ENCODE measurements at regions of chr2 and their contacts with region 1.

Region 1: DNA sequence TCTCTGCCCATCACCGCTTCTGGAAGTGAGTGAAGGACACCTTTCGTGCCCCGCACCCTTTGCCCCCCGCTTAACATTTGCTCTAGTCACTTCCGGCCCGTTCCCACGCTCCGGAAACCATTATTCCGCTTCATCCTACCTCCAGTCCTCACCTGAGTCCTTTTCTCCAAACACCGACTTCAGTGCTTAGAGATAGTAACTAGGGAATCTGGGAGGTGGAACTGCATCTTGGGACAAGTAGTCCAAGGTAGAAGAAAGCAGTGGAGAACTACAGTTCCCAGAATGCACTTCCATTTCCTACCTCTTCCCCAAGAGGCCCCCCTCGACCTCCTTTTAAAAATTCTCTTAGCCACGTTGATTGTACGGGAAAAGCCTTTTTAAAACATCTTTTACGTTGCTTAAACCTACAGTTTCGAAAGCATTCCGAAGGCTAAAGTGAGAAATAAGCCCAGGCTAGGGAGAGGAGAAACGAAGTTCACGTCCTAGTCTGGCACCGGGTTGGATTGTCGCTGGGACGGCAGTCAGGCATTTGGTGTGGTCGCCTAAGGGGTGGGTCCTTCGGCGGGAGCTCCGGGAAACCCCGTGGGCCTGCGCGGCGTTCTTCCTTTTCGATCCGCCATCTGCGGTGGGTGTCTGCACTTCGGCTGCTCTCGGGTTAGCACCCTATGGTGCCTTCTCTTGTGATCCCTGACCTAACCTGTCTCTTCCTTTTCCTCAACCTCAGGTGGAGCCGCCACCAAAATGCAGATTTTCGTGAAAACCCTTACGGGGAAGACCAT is at the starts of genes CLHC1 and RPS27A:
- DNase-seq: peak; percentile 94
- H3K4me3 ChIP-seq: peak within 1 kb of the TSS; percentile 74 to 92 (median 88)
- H3K27ac ChIP-seq: peak within 1 kb of the TSS; percentile 92 to 95 (median 92)
- H3K4me1 ChIP-seq: peaks cover 0 to 34% (median 18%) of the 10 kb centered on the region in 4 donors
- H3K27me3 ChIP-seq: no peaks in the 10 kb centered on the region
- CTCF ChIP-seq: no peak
- EP300 ChIP-seq: no peak
- POLR2A ChIP-seq: peak; percentile 80 to 86
- total RNA-seq, gene CLHC1: 4.9 to 22.4 (median 11.4) TPM
- total RNA-seq, gene RPS27A: 1,474 to 3,968 (median 2,475) TPM

Region 2: DNA sequence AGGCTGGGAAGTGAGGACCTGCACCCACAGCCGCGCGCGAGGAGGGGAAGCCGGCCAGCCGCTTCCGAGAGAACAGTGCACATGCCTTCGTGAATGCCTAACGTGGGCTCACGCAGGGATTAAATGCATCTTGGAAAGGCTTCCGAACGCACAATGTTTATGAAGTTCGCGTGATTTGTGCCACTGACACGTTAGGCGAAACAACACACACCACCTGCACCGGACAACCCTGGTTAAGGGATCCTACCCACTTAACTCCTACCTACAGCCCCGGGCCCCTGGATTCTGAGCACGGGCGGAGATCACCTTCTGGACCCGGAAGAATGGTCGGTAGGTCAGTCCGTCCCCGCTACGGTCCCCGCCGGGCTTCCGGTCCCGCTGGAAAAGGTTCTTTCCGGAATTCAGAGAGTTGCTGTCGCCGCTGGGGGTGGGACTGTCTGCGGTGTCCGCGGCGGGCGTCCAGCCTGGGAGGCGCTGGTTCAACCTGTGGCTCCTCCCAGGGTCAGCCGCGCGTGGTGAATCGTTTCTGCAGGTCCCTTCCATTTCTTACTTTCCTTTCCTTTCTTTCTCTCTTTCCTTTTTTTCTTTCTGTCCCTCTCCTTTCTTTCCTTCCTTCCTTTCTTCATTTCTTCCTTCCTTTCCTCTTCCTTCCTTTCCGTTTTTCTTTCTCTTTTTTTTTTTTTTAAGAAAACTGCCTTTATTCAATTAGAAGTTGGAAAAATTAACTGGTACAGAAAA is 36.8 kb after region 1 on chr2 and contains the start of gene MTIF2:
- intact Hi-C with region 1: loop called (anchors 2 kb)
- DNase-seq: peak; percentile 97
- H3K4me3 ChIP-seq: peak within 1 kb of the TSS; percentile 55 to 73 (median 67)
- H3K27ac ChIP-seq: peak within 1 kb of the TSS; percentile 86 to 90 (median 87)
- H3K4me1 ChIP-seq: peaks cover 0 to 18% (median 14%) of the 10 kb centered on the region in 4 donors
- H3K27me3 ChIP-seq: no peaks in the 10 kb centered on the region
- CTCF ChIP-seq: no peak
- EP300 ChIP-seq: peak in 1 of 4 donors; percentile 14
- POLR2A ChIP-seq: peak; percentile 16 to 31
- total RNA-seq, gene MTIF2: 15.0 to 27.7 (median 22.4) TPM

Region 3: GRCh38 chr2:55364189-55365055 is 132.1 kb after region 1 on chr2:
- intact Hi-C with region 1: loop called (anchors 5 kb)
- DNase-seq: peak; percentile 79
- H3K4me3 ChIP-seq: no peak overlapping the region
- H3K27ac ChIP-seq: peak overlapping the region; percentile 36 to 59 (median 57)
- H3K4me1 ChIP-seq: peaks cover 0 to 23% (median 9%) of the 10 kb centered on the region in 4 donors
- H3K27me3 ChIP-seq: no peaks in the 10 kb centered on the region
- CTCF ChIP-seq: no peak
- EP300 ChIP-seq: no peak
- POLR2A ChIP-seq: no peak

Measured in sigmoid colon (tissue), 7 donors.